Sciatic nerve (tissue), 2 donors: ENCODE measurements at regions of chr22 and their contacts with region 1.

Region 1: DNA sequence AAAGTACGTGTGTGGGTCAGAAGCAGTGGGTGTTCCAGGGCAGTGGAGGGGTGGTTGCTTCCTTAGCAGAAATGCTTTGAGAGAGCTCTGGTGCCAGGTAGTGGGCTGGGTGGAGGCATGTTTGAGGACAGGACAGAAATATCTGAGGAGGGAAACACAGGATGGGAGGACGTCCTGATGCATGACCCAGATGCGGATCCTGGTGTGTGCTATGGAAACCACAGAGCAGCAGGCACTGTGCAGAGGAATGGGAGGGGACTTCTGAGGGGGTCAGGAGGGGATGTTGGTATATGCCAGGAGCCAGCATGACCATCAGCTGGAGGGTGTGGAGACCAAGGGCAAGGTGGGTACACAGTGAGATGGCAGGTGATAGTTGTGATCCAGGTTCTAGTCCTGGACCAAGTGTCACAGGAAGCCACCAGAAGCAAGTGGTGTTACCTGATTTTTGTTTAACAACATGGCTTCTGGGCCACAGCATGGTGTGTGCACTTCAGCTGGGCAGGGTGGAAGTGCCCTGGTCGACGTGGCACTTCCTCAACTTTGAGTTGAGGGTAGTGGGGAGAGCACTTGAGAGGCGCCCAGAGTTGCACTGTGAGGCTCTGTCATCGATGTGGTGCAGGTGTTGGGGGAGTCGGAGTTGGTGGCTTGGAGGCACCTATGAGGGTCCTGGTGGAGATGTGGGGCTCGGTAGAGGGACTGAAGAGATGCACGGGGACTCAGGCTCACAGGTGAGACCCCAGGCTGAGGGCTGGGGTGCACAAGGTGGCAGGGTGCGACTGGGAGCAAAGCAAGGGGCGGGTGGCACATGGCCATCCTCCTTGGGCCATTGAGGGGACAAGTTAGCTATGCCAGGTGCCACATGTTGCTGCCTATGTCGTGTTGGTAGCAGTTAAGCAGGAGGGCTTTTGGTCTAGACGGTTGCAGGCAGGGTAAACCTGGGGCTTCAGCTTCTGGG is 7.6 kb downstream of the DGCR8 start:
- DNase-seq: no peak
- ATAC-seq: no peak

Region 2: DNA sequence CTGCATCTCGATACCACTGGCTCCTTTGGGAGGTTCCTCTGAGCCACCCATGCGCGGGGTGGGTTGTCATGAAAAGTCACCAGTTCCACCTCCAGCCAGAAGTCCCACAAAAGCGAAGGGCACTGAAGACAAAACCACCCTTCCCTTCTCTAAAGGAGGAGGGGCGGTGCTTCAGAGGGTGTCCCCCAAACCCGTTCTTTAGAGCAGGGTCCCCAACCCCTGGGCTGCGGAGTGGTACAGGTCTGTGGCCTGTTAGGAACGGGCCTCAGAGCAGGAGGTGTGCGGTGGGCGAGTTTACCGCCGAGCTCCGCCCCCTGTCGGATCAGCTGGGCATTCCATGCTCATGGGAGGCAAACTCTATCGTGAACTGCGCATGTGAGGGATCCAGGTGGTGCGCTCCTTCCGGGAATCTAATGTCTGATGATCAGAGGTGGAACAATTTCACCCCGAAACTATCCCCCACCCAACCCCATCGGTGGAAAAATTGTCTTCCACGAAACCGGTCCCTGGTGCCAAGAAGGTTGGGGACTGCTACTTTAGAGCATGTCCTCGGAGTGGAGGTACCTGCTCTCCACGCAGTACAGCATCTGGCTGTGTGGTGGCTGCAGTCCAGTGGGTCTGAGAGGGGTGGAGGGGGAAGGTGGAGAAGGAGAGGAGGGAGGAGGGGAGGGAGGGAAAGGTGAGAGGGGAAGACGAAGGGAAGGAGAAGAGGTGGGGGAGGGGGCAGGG is 446.2 kb before region 1 on chr22:
- intact Hi-C with region 1: no loop called
- DNase-seq: peak; percentile 40
- ATAC-seq: no peak

Region 3: DNA sequence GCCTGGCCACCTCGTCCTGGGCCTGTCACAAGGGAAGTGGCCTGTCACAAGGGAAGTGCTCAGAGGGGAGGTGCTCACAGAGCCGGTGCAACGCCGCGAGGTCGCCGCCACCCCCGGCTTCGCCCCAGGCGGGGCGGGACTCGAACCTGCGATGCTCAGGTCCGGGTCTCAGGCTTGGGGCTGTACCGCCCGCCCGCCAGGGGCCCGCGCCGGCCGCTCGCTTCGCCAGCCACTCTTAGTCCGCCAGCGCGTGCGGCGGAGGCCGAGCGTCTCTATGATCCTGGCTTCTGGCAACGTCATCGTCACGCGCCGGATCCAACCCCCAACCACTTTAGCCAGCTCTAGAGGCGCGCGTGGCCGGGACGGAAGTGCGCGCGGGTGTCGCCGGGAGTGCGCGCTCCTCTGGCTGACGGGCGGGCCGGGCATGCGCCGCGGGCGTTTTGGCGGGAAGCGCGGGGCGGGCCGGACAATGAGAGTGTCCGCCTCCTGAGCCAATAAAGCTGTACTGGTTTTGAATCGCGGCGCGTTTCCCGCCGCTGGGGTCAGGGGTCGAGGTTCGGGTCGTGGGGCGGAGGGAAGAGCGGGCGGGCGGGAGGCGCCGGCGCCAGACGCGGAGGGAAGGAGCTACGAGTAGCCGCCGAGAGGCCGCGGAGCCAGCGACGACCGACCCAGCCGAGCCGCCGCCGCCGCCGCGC is 29.5 kb after region 1 on chr22 and contains the start of gene TRMT2A:
- intact Hi-C with region 1: loop called (anchors 2 kb)
- DNase-seq: peak; percentile 99
- ATAC-seq: peak; percentile 96
- total RNA-seq, gene TRMT2A: 46.8 TPM